PC-9 (cell line): ENCODE measurements at regions of chr3 and their contacts with region 1.

Region 1: GRCh38 chr3:188164248-188164687 is 10.3 kb downstream of the LPP start:
- DNase-seq: peak; percentile 91 to 100
- H3K4me3 ChIP-seq: peak overlapping the region; percentile 16; the same call in 1 of the 2 replicates
- H3K27ac ChIP-seq: peak overlapping the region; percentile 91
- H3K4me1 ChIP-seq: peaks cover 65% of the 10 kb centered on the region
- H3K27me3 ChIP-seq: no peaks in the 10 kb centered on the region
- CTCF ChIP-seq: no peak; the same call in 1 of the 2 replicates

Region 2: GRCh38 chr3:187551416-187551815 is 612.9 kb before region 1 on chr3:
- CTCF ChIA-PET with region 1: no interaction called
- POLR2A ChIA-PET with region 1: no interaction called
- intact Hi-C with region 1: no loop called
- DNase-seq: no peak
- H3K4me3 ChIP-seq: no peak overlapping the region
- H3K27ac ChIP-seq: no peak overlapping the region
- H3K4me1 ChIP-seq: no peaks in the 10 kb centered on the region
- H3K27me3 ChIP-seq: peaks cover 51% of the 10 kb centered on the region
- CTCF ChIP-seq: no peak

Region 3: GRCh38 chr3:187848401-187848800 is 315.9 kb before region 1 on chr3:
- CTCF ChIA-PET with region 1: no interaction called
- POLR2A ChIA-PET with region 1: interaction called, 11 read pairs
- intact Hi-C with region 1: no loop called
- DNase-seq: peak in 1 of 2 experiments; percentile 30
- H3K4me3 ChIP-seq: no peak overlapping the region
- H3K27ac ChIP-seq: no peak overlapping the region
- H3K4me1 ChIP-seq: peaks cover 22% of the 10 kb centered on the region
- H3K27me3 ChIP-seq: no peaks in the 10 kb centered on the region
- CTCF ChIP-seq: no peak

Region 4: GRCh38 chr3:187955076-187955952 is 209.0 kb before region 1 on chr3:
- CTCF ChIA-PET with region 1: no interaction called
- POLR2A ChIA-PET with region 1: no interaction called
- intact Hi-C with region 1: loop called (anchors 1 kb)
- DNase-seq: peak; percentile 53 to 98
- H3K4me3 ChIP-seq: peak overlapping the region; percentile 23
- H3K27ac ChIP-seq: peak overlapping the region; percentile 90
- H3K4me1 ChIP-seq: peaks cover 71% of the 10 kb centered on the region
- H3K27me3 ChIP-seq: no peaks in the 10 kb centered on the region
- CTCF ChIP-seq: no peak

Region 5: DNA sequence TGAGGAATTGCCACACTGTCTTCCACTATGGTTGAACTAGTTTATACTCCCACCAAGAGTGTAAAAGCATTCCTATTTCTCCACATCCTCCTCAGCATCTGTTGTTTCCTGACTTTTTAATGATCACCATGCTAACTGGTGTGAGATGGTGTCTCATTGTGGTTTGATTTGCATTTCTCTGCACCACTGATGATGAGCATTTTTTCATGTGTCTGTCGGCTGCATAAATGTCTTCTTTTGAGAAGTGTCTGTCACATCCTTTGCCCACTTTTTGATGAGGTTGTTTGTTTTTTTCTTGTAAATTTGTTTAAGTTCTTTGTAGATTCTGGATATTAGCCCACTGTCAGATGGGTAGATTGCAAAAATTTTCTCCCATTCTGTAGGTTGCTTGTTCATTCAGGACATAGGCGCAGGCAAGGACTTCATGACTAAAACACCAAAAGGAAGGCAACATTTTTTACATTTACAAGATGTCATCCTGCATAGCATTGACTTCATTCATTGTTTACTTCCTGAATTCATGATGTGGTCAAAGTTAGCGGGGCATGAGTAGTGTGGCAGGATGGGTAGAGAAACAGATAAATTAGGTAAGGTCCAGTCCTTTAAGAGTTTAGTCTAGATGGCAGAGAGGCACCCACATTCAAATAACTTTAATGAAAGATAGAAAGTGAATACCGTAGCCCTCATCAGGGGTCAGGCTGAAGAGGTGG is 55.4 kb before region 1 on chr3:
- CTCF ChIA-PET with region 1: no interaction called
- POLR2A ChIA-PET with region 1: no interaction called
- intact Hi-C with region 1: no loop called
- DNase-seq: no peak
- H3K4me3 ChIP-seq: no peak overlapping the region
- H3K27ac ChIP-seq: no peak overlapping the region
- H3K4me1 ChIP-seq: no peaks in the 10 kb centered on the region
- H3K27me3 ChIP-seq: no peaks in the 10 kb centered on the region
- CTCF ChIP-seq: no peak

Region 6: GRCh38 chr3:188197388-188197847 is 33.1 kb after region 1 on chr3:
- CTCF ChIA-PET with region 1: no interaction called
- POLR2A ChIA-PET with region 1: no interaction called
- intact Hi-C with region 1: loop called (anchors 2 kb)
- DNase-seq: peak; percentile 61 to 70
- H3K4me3 ChIP-seq: no peak overlapping the region
- H3K27ac ChIP-seq: no peak overlapping the region
- H3K4me1 ChIP-seq: peaks cover 24% of the 10 kb centered on the region
- H3K27me3 ChIP-seq: no peaks in the 10 kb centered on the region
- CTCF ChIP-seq: no peak

Region 7: DNA sequence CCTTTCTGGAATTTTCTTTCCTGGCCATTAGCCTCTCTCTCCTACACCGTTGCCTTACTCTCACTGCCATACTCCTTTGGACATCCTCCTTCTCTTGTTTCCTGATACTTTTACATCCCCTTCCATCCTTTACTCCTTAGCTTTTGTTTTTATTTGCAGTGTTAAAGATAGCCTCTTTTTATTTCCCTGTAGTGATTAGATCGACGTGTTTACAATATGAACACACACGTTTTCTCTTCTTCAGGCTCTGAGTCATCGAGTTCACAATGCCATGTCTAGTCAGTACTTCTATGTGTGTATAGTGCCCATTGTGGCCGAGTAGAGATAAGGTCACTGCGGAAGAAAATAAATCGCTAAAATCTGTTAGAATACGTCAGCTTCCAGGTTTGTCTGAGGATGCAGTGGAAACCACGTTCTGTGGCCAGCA is 198.2 kb after region 1 on chr3:
- CTCF ChIA-PET with region 1: no interaction called
- POLR2A ChIA-PET with region 1: no interaction called
- intact Hi-C with region 1: loop called (anchors 2 kb)
- DNase-seq: peak; percentile 41 to 87
- H3K4me3 ChIP-seq: no peak overlapping the region
- H3K27ac ChIP-seq: peak overlapping the region; percentile 17; the same call in 1 of the 2 replicates
- H3K4me1 ChIP-seq: peaks cover 9% of the 10 kb centered on the region
- H3K27me3 ChIP-seq: no peaks in the 10 kb centered on the region
- CTCF ChIP-seq: 0 out of 2 replicates have a peak, but pooled peaks have one; percentile 38

Region 8: GRCh38 chr3:188881954-188882641 is 717.8 kb after region 1 on chr3:
- CTCF ChIA-PET with region 1: no interaction called
- POLR2A ChIA-PET with region 1: no interaction called
- intact Hi-C with region 1: loop called (anchors 5 kb)
- DNase-seq: peak in 1 of 2 experiments; percentile 96
- H3K4me3 ChIP-seq: no peak overlapping the region
- H3K27ac ChIP-seq: peak overlapping the region; percentile 57
- H3K4me1 ChIP-seq: peaks cover 25% of the 10 kb centered on the region
- H3K27me3 ChIP-seq: no peaks in the 10 kb centered on the region
- CTCF ChIP-seq: no peak